Esophagus squamous epithelium (tissue), 5 donors: ENCODE measurements at regions of chr3 and their contacts with region 1.

Region 1: DNA sequence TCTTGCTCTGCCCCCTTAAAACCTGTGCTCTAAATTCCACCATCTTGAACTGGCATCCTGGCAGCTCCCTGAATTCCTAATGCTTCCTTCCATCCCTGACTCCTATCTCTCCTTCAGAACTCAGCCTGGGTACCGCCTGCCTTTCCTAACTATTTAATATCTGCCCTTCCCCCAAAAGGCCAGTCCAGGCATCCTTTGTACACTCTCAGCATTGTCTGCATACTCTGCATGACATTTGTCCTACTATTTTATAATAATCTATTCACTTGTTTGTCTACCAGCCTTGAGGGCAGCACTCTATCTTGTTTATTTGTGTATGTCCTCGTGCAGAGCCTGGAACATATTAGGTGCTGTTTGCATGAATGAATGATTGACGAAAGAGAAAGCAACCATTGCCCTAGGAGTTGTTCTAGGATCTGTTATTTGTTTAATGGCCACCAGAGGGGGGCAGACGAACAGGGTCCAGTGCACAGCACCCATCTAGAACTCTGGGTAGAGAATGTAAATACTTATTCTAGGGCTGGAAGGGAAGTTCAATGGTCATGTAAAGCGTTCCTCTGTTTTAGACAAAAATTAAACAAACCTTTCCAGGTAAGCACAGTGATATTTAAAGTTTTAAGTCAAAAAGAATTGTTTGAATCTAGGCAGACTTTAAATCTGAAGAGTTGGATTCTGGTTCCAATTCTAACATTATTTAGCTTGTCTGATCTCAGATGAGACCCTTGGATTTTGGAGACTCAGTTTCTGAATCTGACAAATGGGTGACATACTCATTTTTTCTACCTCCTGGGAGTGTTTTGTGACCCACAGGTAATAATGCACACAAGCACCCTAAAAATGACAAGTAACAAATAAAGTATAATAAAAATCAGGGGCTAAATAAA is 125.8 kb upstream of the GALNT15 start:
- DNase-seq: no peak
- H3K4me3 ChIP-seq: peak overlapping the region in 1 of 4 donors; percentile 42
- H3K27ac ChIP-seq: no peak overlapping the region
- H3K4me1 ChIP-seq: peaks cover 0 to 32% (median 5%) of the 10 kb centered on the region in 3 donors
- H3K27me3 ChIP-seq: no peaks in the 10 kb centered on the region
- CTCF ChIP-seq: peak; percentile 54 to 86 (median 80)
- POLR2A ChIP-seq: no peak

Region 2: DNA sequence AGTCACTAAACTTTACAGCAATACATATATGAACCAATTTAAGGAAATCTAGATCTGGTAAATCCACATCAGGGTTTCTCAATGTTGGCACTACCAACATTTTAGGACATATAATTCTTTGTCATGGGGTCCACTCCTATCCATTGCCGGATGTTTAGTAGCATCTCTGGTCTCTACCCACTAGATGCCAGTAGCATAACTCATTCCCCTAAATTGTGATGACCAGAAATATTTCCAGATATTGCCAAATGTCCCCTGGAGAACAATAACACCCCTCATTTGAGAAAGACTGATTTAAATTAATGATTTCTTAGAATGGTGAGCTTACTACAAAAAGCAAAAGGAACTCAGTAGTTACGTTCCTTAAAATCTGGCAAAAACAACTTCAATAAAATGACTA is 227.8 kb before region 1 on chr3:
- intact Hi-C with region 1: loop called (anchors 10 kb)
- DNase-seq: no peak
- H3K4me3 ChIP-seq: no peak overlapping the region
- H3K27ac ChIP-seq: no peak overlapping the region
- H3K4me1 ChIP-seq: peaks cover 0 to 12% (median 0%) of the 10 kb centered on the region in 3 donors
- H3K27me3 ChIP-seq: no peaks in the 10 kb centered on the region
- CTCF ChIP-seq: no peak
- POLR2A ChIP-seq: no peak

Region 3: GRCh38 chr3:16177962-16178627 is 129.4 kb after region 1 on chr3:
- intact Hi-C with region 1: loop called (anchors 5 kb)
- DNase-seq: no peak
- H3K4me3 ChIP-seq: peak overlapping the region in 3 of 4 donors; percentile 39 to 66 (median 46)
- H3K27ac ChIP-seq: peak overlapping the region in 3 of 4 donors; percentile 10 to 87 (median 48)
- H3K4me1 ChIP-seq: peaks cover 0 to 55% (median 22%) of the 10 kb centered on the region in 3 donors
- H3K27me3 ChIP-seq: peaks cover 0 to 49% (median 0%) of the 10 kb centered on the region in 4 donors
- CTCF ChIP-seq: peak; percentile 60 to 97 (median 94)
- POLR2A ChIP-seq: no peak

Region 4: GRCh38 chr3:16240283-16241023 is 191.8 kb after region 1 on chr3:
- intact Hi-C with region 1: loop called (anchors 5 kb)
- DNase-seq: no peak
- H3K4me3 ChIP-seq: no peak overlapping the region
- H3K27ac ChIP-seq: peak overlapping the region in 3 of 4 donors; percentile 51 to 62 (median 61)
- H3K4me1 ChIP-seq: peaks cover 0 to 32% (median 16%) of the 10 kb centered on the region in 3 donors
- H3K27me3 ChIP-seq: peaks cover 0 to 8% (median 0%) of the 10 kb centered on the region in 4 donors
- CTCF ChIP-seq: no peak
- POLR2A ChIP-seq: no peak